Right ventricle myocardium superior (tissue), 1 donor: ENCODE measurements at regions of chr3 and their contacts with region 1.

Region 1: DNA sequence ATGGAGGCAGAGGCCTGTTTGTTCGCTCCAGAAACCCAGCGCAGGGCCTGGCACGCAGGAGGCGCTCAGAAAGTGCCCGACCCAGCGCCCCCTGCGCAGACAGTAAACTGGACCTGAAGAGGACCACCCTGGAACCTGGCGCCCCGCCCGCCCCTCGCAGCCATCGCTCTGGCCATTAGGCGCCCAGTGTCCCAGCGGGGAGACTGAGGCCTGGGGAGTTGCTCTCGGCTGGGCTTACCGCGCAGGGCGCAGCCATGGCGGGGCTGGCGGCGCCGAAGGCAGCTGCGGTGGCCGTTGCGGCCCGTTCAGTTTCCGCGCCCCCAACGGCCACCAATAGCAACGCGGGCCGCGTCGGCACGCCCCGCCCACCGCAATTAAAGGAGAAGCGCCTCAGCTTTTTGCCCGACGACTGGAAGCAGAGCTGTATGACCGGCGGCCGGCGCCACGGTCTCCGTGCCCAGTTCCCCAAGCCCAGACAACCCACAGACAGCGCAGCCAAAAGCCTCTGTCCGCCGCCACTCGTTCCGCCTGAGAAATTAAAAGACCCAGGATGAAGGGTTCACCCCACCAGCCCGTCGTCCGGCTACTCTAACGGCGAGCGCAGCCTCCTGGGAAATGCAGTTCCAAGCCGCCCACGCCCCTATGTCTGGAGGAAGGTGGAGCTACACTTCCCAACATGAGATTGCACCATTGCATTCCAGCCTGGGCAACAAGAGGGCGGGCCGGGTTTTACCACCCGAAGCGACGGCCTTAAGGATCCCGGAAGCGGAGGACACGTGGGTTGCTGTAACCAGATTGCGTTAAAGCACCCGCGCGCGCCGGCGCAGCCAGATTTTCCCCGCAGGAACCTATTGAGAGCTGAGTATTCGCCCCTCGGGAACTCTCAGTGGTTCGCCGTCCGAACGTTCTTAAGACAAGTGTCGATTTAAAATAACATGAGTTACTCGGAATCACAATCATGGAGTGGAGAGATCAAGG is at the start of gene POC1A:
- DNase-seq: peak; percentile 98
- ATAC-seq: peak; percentile 98
- total RNA-seq, gene POC1A: 1.5 TPM

Region 2: DNA sequence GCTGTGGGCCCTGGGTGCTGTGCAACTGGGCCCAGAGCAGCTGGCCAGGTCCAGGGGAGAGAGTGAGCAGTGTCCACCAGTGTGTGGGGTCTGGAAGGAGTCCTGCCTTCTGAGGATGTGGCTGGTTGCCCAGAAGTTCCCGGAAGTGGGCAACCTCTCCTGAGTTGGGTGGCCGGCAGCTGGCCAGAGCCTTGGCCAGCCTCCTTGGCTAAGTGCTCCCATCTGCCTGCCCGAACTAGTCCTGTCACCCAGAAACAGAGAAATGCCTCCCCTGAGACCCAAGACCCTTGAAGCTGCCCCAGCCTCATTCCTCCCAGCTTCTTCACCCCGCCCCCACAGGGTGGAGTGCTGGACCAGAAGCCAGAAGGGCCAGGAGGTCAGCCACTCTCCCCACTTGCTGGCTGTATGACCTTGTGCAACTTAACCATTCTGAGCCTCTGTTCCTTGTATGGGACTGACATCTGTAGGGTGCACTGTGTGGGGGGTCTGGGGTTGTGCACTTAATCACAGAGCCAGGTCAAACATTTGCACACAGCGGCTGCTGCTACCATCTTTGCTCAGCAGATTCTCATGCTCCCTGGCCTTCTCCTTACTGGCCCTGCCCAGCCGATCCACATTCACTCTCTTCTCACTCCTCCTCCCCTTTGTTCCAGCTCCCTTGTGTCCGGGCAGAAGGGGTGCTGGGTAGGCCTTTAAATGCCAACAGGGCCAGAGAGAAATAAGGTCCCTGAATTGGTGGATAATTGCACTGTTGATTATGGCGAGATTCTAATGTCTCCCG is 36.1 kb after region 1 on chr3:
- intact Hi-C with region 1: loop called (anchors 5 kb)
- DNase-seq: peak; percentile 58
- ATAC-seq: peak; percentile 41

Region 3: DNA sequence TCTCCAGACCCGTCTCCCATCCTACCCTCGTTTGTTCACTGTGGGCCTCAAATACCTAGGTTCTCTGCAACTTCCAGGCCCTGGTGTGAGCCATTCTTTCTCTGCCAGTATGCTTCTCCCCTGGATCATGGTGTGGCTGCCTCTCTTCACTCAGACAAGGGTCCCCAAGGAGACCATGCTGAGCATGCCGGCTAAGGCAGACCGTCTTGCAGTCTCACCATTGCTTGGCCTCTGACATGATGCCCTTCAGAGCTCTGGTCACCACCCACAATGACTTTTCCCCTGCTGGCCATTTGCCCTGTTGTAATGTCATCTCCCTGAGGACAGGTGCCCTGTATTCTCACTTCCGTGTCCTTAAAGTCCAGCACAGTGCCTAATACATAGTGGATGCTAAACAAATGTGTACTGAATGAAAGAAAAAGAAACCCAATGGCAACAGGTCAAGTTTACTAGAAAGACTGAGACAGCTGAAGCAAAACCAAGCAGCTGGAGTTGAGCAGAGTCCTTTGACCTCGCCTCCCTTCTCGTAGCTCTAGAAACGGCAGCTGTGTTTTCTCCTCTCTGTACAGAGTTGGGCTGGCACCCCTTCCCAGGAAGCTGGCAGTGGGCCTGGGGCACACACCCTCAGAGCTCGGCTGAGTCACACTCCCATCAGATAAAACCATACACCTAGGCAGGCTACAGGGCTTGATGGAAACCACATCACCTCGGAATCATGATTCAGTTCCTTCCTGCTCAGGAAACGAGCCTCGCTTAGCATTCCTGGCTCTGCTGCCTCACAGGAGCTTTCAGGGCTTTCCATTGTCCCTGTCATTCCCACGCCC is 62.4 kb after region 1 on chr3:
- intact Hi-C with region 1: loop called (anchors 10 kb)
- DNase-seq: peak; percentile 77
- ATAC-seq: peak; percentile 47